Dorsolateral prefrontal cortex (tissue), 120 donors: ENCODE measurements at regions of chr1 and their contacts with region 1.

Region 1: DNA sequence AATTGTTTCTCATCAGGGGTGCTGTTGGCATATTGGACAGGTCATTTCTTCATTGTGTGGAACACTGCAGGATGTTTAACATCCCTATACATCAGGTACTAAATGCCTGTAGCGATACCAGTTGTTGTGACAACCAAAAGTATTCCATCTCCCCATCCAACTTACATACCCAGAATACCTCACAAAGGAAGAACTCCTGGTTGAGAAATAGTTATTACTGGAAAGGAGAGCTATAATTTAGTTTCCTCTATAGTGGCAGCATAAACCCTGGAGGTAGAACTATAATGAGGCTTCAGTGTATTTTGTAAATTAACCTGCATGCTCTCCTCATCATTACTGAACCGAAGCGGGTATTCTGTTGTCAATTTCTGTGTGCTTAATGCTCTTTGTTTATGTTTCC is 45.1 kb downstream of the IVNS1ABP start:
- DNase-seq: no peak
- H3K4me3 ChIP-seq: no peak overlapping the region
- H3K27ac ChIP-seq: no peak overlapping the region
- H3K27me3 ChIP-seq: no peaks in the 10 kb centered on the region
- CTCF ChIP-seq: no peak

Region 2: GRCh38 chr1:185250063-185250462 is 21.9 kb before region 1 on chr1:
- intact Hi-C with region 1: loop called in 1 of 2 experiments (anchors 2 kb)
- DNase-seq: no peak
- H3K4me3 ChIP-seq: no peak overlapping the region
- H3K27ac ChIP-seq: no peak overlapping the region
- H3K27me3 ChIP-seq: no peaks in the 10 kb centered on the region
- CTCF ChIP-seq: no peak